ENCODE measurements at regions of chr5 and their contacts with region 1.

Region 1: DNA sequence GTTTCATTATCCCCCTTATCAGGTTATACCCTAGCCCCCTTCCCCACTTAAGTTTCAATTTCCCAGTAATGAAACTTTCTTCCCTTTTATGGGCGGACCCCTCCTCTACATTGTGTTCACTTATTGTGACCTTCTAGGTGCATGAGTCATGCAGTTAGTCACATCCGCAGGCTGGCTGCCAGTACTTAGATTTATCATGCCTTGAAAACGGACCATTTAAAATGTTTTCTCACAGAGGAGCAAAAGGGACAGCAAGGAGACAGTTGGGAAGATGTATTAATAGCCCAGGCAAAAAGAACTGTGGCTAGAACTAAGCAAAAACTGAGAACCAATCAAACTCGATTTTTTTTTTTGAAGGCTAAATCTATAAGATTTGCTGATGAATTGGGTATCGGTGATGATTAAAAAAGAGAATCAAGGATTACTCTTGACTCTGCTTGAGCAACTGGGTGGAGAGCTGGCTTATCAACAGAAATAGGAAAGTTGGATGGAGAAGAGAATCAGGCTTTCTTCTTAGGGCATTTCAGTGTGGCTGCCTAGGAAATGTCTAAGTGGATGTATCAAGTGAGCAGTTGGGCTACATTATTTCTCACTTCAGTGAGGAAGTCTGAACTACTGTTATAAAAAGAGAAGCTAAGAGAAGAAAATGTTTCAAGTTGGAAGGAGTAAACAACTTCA is 615.0 kb downstream of the HINT1 start:
- DNase-seq: peak; percentile 60 to 66
- H3K4me3 ChIP-seq: no peak overlapping the region
- H3K27ac ChIP-seq: peak overlapping the region; percentile 54
- H3K4me1 ChIP-seq: peaks cover 35% of the 10 kb centered on the region
- H3K27me3 ChIP-seq: no peaks in the 10 kb centered on the region
- CTCF ChIP-seq: no peak

Region 2: DNA sequence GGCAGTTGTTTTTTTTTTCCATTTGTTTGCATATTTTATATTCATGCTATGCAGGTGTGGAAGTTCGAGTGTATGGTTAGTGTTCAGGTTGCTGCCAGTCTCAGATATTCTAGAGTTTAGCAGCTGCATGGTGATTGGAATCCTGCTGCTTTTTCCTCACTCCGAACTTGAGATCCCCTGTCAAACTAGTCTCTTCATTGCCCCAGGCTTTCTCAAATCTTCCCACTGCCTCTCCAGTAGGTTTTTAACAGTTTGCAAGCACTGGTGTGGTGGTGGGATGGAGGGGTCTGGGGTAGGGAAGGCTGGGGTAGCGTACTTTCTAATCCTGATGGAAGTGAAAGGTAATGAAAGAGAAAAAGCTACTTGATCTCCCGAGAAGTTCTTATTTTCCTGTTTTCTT is 532.9 kb before region 1 on chr5:
- CTCF ChIA-PET with region 1: no interaction called
- POLR2A ChIA-PET with region 1: no interaction called
- intact Hi-C with region 1: no loop called
- DNase-seq: no peak
- H3K4me3 ChIP-seq: no peak overlapping the region
- H3K27ac ChIP-seq: no peak overlapping the region
- H3K4me1 ChIP-seq: no peaks in the 10 kb centered on the region
- H3K27me3 ChIP-seq: no peaks in the 10 kb centered on the region
- CTCF ChIP-seq: no peak

Region 3: DNA sequence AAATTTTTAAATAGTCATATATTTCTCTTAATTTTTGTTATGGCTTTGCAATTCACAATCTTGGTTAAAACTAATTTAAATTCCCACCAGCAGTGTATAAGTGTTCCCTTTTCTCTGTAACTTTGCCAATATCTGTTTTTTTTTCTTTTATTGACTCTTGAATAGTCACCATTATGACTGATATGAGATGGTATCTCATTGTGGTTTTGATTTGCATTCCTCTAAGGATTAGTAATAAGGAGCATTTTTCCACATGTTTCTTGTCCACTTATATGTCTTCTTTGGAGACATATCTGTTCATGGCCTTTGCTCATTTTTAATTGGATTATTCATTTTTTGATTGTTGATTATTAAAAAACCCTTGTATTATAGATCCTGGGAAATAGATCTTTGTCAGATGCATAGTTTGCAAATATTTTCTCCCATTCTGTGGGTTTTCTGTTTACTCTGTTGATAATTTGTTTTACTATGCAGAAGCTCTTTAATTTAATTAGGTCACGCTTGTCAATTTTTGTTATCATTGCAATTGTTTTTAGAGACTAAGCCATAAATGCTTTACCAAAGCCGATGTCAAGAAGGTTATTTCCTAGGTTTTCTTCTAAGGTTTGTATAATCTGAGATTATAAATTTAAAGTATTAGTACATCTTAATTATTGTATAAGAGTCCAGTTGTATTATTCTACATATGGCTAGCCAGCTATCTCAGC is 34.9 kb before region 1 on chr5:
- CTCF ChIA-PET with region 1: no interaction called
- POLR2A ChIA-PET with region 1: no interaction called
- intact Hi-C with region 1: loop called (anchors 5 kb)
- DNase-seq: peak in 1 of 2 experiments; percentile 78
- H3K4me3 ChIP-seq: no peak overlapping the region
- H3K27ac ChIP-seq: no peak overlapping the region
- H3K4me1 ChIP-seq: peaks cover 12% of the 10 kb centered on the region
- H3K27me3 ChIP-seq: no peaks in the 10 kb centered on the region
- CTCF ChIP-seq: no peak

Region 4: DNA sequence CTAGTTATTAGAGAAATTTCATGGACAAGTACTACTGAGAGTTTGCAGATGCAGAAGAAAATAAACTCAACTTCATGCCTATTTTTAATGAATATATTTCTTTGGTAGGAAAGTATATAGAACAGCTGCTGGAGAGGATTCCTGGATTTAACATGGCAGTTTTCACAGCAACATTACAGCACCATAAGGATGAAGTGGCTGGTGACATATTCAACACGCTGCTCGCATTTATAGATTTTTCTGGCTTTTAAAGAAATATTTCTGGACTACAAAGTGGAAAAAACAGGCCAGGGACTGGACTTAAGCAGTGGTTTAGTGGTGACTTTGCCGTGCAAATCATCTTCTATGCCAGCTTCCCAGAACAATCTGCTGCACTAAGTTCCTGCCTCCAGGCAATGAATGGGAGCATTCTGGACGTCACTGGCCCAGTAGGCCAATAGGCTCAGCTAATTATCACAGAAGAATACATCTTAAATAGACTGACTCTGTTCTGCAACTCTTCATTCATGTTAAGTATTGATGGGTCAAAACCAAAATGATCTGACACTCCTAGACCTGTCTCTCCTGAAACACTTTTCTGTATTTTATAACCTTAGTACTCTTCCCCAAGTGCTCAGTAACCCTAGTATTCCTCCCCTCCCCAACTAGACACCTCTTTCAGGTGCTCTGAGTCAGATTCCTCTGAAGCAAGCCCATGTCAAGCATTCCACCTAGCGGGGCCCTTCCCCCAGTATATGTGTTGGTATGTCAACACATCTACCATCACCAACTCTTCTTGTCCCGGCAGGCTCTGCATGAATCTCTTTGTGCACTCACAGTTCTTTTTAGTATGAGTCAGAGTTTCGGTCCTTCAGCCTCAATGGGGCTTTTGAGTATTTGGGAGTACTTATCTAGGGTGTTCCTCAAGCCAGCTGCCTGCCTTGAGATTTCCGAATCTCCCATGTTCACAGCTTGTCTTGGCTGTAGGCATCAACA is 20.2 kb before region 1 on chr5:
- CTCF ChIA-PET with region 1: no interaction called
- POLR2A ChIA-PET with region 1: no interaction called
- intact Hi-C with region 1: no loop called
- DNase-seq: peak in 1 of 2 experiments; percentile 44
- H3K4me3 ChIP-seq: no peak overlapping the region
- H3K27ac ChIP-seq: no peak overlapping the region
- H3K4me1 ChIP-seq: 0 out of 2 replicates have a peak, but pooled peaks cover 8% of the 10 kb centered on the region
- H3K27me3 ChIP-seq: no peaks in the 10 kb centered on the region
- CTCF ChIP-seq: no peak

Region 5: GRCh38 chr5:132205385-132206125 is 1655.5 kb after region 1 on chr5:
- CTCF ChIA-PET with region 1: no interaction called
- POLR2A ChIA-PET with region 1: no interaction called
- intact Hi-C with region 1: no loop called
- DNase-seq: peak in 1 of 2 experiments; percentile 15
- H3K4me3 ChIP-seq: no peak overlapping the region
- H3K27ac ChIP-seq: no peak overlapping the region
- H3K4me1 ChIP-seq: no peaks in the 10 kb centered on the region
- H3K27me3 ChIP-seq: no peaks in the 10 kb centered on the region
- CTCF ChIP-seq: no peak

Measured in PC-9 (cell line).